ENCODE measurements at regions of chr19 and their contacts with region 1.

Region 1: GRCh38 chr19:9431475-9431874 is 3.9 kb downstream of the ZNF266 start:
- DNase-seq: peak in 2 of 3 donors; percentile 16 to 67
- ATAC-seq: no peak
- H3K4me3 ChIP-seq: no peak overlapping the region
- H3K27ac ChIP-seq: no peak overlapping the region
- H3K4me1 ChIP-seq: no peaks in the 10 kb centered on the region
- H3K27me3 ChIP-seq: no peaks in the 10 kb centered on the region

Region 2: DNA sequence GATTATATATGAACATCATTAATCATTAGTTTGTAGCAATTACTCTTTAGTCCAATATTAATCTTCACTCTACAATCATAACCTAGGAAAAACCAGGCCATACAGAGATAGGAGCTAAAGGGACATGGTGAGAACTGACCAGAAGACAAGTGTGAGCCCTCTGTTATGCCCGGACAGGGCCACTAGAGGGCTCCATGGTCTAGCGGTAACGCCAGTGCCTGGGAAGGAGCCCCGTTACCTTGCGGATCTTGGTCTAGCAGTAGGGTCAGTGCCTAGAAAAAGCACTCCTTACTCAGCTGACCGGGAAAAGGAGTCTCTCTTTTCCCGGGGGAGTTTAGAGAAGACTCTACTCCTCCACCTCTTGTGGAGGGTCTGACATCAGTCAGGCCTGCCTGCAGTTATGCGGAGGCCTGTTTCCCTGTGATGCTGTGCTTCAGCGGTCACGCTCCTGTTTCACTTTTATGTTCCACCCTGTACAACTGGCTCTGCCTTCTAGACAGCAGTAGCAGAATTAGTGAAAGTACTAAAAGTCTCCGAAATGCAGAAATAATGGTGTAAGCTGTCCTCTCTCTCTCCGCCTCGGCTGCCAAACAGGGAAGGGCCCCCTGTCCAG is 225.9 kb before region 1 on chr19:
- intact Hi-C with region 1: loop called in 1 of 4 experiments (anchors 5 kb)
- DNase-seq: peak; percentile 70 to 88 (median 84)
- ATAC-seq: peak; percentile 72 to 75
- H3K4me3 ChIP-seq: peak overlapping the region; percentile 14
- H3K27ac ChIP-seq: no peak overlapping the region
- H3K4me1 ChIP-seq: no peaks in the 10 kb centered on the region
- H3K27me3 ChIP-seq: no peaks in the 10 kb centered on the region

Region 3: DNA sequence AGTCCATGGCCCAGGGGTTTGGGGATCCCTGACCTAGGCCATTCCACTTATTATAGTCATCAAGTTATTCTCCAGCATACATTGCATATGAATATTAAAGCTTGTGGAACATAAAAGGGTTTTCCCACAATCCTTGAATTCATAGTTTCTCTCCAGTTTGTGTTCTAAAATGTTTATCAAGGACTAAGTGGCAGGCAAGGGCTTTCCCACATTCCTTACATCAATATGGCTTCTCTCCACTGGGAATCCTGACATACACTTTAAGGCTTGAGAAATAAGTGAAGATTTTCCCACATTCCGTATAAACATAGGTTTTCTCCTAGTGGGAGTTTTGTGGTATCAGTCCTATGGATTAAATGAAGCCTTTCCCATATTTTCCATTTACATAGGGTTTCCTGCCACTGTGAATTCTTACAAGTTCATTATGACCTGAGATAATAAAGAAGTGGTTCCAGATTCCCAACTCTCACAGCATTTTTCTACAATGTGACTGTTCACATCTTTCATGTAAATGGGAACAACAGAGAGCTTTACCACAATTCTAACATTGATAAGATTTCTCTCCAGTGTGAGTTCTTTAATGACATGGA is 92.5 kb after region 1 on chr19:
- intact Hi-C with region 1: no loop called
- DNase-seq: no peak
- ATAC-seq: no peak
- H3K4me3 ChIP-seq: no peak overlapping the region
- H3K27ac ChIP-seq: no peak overlapping the region
- H3K4me1 ChIP-seq: no peaks in the 10 kb centered on the region
- H3K27me3 ChIP-seq: no peaks in the 10 kb centered on the region